ENCODE measurements at regions of chr11 and their contacts with region 1.

Region 1: DNA sequence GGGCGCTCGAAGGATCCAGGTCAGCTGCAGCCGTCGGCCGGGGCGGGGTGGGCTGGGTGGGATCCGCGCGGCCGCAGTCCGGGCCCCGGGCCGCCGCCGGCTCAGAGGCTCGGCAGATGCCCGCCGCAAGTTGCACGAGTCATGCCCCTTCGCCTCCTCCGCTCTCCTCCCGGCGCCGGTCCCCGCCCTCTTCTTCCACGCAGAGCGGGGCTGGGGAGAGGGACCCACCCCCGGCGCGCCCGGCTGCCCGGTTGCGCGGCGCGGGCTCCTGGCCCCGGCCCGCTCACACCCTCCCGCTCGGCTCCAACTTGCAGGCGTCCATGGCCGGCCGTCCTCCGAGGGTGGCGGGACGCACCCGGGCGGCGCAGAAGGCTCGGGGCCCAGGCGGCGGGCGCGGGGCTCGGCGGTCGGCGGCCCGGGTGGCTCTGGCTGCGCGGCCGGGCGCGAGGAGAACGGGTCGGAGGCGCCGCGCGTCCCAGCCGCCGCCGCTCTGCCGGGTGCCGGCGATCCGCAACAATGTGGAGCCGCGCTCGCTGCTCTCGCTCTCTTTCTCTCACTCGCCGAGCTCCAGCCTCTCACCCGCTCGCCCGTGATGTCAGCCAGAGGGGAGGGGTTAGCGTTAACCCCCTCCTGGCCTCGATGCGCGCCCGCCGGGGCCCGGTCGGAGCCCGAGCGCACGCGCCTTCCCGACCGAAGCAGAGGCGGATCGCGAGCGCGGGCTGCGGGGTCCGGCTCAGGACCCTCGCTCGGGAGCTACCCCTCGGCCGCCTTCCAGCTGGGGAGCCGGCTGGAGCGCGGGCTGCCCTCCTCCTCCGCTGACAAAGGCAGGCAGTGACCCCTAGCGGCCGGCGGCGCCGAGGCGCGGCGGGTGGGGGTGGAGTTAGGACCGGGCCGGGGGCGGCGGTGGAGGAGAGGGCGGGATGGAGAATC is at the start of gene NECTIN1:
- DNase-seq: peak; percentile 79
- ATAC-seq: peak; percentile 92
- H3K4me3 ChIP-seq: peak within 1 kb of the TSS; percentile 72
- H3K27ac ChIP-seq: peak within 1 kb of the TSS; percentile 65
- H3K4me1 ChIP-seq: peaks cover 4% of the 10 kb centered on the region; the same call in 1 of the 2 replicates
- H3K27me3 ChIP-seq: peaks cover 16% of the 10 kb centered on the region
- CTCF ChIP-seq: peak; percentile 78
- POLR2A ChIP-seq: peak; percentile 57; the same call in 1 of the 2 replicates
- RAD21 ChIP-seq: peak; percentile 68
- total RNA-seq, gene NECTIN1: 1.7 and 2.3 TPM in 2 replicates

Region 2: DNA sequence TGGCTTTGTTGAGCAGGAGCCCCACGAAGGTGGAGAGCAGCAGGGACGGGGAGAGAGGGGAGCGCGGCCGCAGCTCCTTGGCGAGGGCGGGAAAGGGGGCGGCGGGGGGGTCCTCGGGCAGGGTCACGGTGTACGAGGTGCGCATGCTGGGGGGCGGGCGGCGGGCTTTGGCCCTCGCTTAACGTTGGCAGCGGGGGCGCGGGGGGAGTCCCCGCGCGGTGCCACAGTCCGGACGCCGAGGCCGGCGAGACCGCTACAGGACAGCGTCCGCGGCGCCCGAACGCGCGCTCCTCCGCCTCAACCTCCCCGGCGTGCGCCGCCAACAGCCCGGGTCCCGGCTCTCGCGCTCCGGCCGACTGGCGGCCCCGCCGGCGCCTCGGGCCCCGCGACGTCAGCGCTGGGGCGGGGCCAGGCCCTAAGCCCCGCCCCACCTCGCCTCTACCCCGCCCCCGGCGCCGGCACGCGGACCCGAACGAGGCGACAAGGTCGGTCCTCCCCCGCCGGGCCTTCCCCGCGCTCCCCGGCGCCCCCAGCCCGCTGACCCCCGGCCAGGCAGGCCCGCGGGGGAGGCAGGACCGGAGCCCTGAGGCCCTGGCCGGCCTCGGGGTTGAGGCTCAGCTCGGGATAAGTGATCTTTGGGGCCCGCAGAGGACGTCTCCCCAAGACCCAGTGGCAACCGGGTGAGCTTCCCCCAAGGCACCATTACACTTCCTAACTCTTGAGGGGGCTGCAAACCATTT is 364.9 kb before region 1 on chr11:
- CTCF ChIA-PET with region 1: no interaction called
- POLR2A ChIA-PET with region 1: no interaction called
- dilution Hi-C with region 1: no loop called
- in situ Hi-C with region 1: no loop called
- intact Hi-C with region 1: loop called (anchors 10 kb)
- DNase-seq: no peak
- ATAC-seq: peak; percentile 76
- H3K4me3 ChIP-seq: peak overlapping the region; percentile 38
- H3K27ac ChIP-seq: no peak overlapping the region
- H3K4me1 ChIP-seq: peaks cover 34% of the 10 kb centered on the region
- H3K27me3 ChIP-seq: no peaks in the 10 kb centered on the region
- CTCF ChIP-seq: no peak
- POLR2A ChIP-seq: no peak
- RAD21 ChIP-seq: no peak

Region 3: DNA sequence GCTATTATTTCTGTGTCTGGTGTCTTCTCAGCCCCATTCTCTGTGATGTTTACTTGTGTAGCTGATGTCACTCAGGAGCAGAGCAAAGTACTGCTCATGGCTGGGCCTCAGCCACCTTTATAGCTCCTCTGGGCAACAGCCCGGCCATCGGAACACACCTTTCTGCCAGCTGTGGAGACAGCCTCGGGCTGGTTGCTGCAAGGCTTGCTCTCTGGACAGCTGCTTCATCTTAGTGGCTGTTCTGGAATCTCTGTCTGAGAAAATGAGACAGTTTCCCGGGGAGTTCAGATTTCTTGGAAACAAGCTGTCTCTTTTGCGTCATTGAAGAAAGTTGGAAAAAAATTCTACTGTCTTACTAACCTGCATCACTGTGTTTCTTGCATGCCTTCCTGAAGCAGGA is 325.9 kb before region 1 on chr11:
- CTCF ChIA-PET with region 1: no interaction called
- POLR2A ChIA-PET with region 1: no interaction called
- dilution Hi-C with region 1: no loop called
- in situ Hi-C with region 1: loop called (anchors 10 kb)
- intact Hi-C with region 1: no loop called
- DNase-seq: peak; percentile 29
- ATAC-seq: peak; percentile 56
- H3K4me3 ChIP-seq: no peak overlapping the region
- H3K27ac ChIP-seq: no peak overlapping the region
- H3K4me1 ChIP-seq: peaks cover 5% of the 10 kb centered on the region; the same call in 1 of the 2 replicates
- H3K27me3 ChIP-seq: no peaks in the 10 kb centered on the region; the same call in none of the 2 replicates
- CTCF ChIP-seq: no peak
- POLR2A ChIP-seq: no peak
- RAD21 ChIP-seq: no peak

Region 4: GRCh38 chr11:119666463-119667131 is 62.3 kb before region 1 on chr11:
- CTCF ChIA-PET with region 1: interaction called, 16 read pairs
- POLR2A ChIA-PET with region 1: no interaction called
- dilution Hi-C with region 1: no loop called
- in situ Hi-C with region 1: no loop called
- intact Hi-C with region 1: loop called (anchors 1 kb)
- DNase-seq: peak; percentile 47
- ATAC-seq: peak; percentile 95
- H3K4me3 ChIP-seq: no peak overlapping the region
- H3K27ac ChIP-seq: no peak overlapping the region
- H3K4me1 ChIP-seq: peaks cover 4% of the 10 kb centered on the region; the same call in 1 of the 2 replicates
- H3K27me3 ChIP-seq: no peaks in the 10 kb centered on the region
- CTCF ChIP-seq: peak; percentile 94
- POLR2A ChIP-seq: peak; percentile 35; the same call in 1 of the 2 replicates
- RAD21 ChIP-seq: peak; percentile 98

Region 5: GRCh38 chr11:119765628-119766027 is 36.7 kb after region 1 on chr11:
- CTCF ChIA-PET with region 1: no interaction called
- POLR2A ChIA-PET with region 1: no interaction called
- dilution Hi-C with region 1: no loop called
- in situ Hi-C with region 1: no loop called
- intact Hi-C with region 1: no loop called
- DNase-seq: no peak
- ATAC-seq: no peak
- H3K4me3 ChIP-seq: no peak overlapping the region
- H3K27ac ChIP-seq: no peak overlapping the region
- H3K4me1 ChIP-seq: no peaks in the 10 kb centered on the region
- H3K27me3 ChIP-seq: peaks cover 14% of the 10 kb centered on the region
- CTCF ChIP-seq: no peak
- POLR2A ChIP-seq: no peak
- RAD21 ChIP-seq: no peak

Region 6: GRCh38 chr11:120108154-120108865 is 379.4 kb after region 1 on chr11:
- CTCF ChIA-PET with region 1: interaction called, 16 read pairs
- POLR2A ChIA-PET with region 1: no interaction called
- dilution Hi-C with region 1: no loop called
- in situ Hi-C with region 1: no loop called
- intact Hi-C with region 1: loop called (anchors 2 kb)
- DNase-seq: peak; percentile 30
- ATAC-seq: peak; percentile 99
- H3K4me3 ChIP-seq: no peak overlapping the region
- H3K27ac ChIP-seq: no peak overlapping the region
- H3K4me1 ChIP-seq: no peaks in the 10 kb centered on the region
- H3K27me3 ChIP-seq: peaks cover 68% of the 10 kb centered on the region
- CTCF ChIP-seq: peak; percentile 98
- POLR2A ChIP-seq: no peak
- RAD21 ChIP-seq: peak; percentile 95

Region 7: GRCh38 chr11:120210626-120211521 is 482.0 kb after region 1 on chr11 and contains the start of gene OAF:
- CTCF ChIA-PET with region 1: no interaction called
- POLR2A ChIA-PET with region 1: no interaction called
- dilution Hi-C with region 1: no loop called
- in situ Hi-C with region 1: no loop called
- intact Hi-C with region 1: loop called (anchors 5 kb)
- DNase-seq: peak; percentile 83
- ATAC-seq: peak; percentile 82
- H3K4me3 ChIP-seq: peak within 1 kb of the TSS; percentile 77
- H3K27ac ChIP-seq: peak within 1 kb of the TSS; percentile 92
- H3K4me1 ChIP-seq: peaks cover 17% of the 10 kb centered on the region
- H3K27me3 ChIP-seq: no peaks in the 10 kb centered on the region
- CTCF ChIP-seq: peak; percentile 26; the same call in 1 of the 2 replicates
- POLR2A ChIP-seq: peak; percentile 56
- RAD21 ChIP-seq: no peak
- total RNA-seq, gene OAF: 9.9 and 10.8 TPM in 2 replicates